Breast epithelium (tissue), 4 donors: ENCODE measurements at regions of chr1 and their contacts with region 1.

Region 1: DNA sequence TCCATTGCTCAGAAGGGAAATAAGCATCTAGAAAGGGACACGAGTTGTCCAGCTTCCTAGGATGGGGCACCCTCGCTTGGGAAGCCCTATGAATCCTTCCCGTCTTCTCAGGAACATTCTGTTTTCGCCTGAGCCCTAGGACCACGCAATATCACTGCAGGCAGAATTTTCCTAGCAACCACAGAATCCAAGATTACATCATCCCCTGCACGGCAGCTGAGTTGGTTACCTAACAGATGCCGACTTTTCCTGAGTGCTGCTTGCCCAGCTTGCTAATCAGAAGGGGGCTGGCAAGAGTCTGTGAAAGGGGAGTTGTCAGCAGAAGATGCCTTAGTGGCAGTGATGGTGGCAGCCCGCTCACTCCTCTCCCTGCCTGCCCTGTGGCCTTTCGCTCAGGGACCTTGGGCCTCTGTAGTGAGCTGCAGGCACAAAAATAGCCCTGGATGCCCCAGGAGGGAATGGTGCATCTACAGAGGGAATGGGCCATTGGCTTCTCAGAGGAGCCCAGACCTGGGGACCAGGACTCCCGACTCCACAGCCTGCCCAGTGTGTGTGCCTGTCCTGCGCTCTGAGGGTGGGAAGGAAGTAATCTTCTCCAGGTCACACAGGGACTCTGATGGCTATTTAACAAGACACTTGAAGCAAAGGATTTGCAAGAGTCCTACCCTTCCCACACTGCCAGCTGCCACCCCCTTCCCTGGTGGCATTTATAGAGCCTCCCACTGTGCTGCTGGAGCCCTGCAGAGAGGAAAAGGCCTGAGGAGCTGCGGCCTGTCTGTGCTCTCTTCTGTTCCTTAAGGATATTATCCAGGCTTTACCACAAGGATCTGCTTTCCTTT is 28.9 kb upstream of the CLSTN1 start:
- DNase-seq: peak in 1 of 2 donors; percentile 80
- H3K4me3 ChIP-seq: no peak overlapping the region
- H3K27ac ChIP-seq: peak overlapping the region; percentile 82 to 92
- H3K4me1 ChIP-seq: no peaks in the 10 kb centered on the region
- H3K27me3 ChIP-seq: no peaks in the 10 kb centered on the region
- CTCF ChIP-seq: no peak
- POLR2A ChIP-seq: no peak

Region 2: GRCh38 chr1:9438431-9439073 is 414.1 kb before region 1 on chr1:
- intact Hi-C with region 1: no loop called
- DNase-seq: peak; percentile 66 to 87
- H3K4me3 ChIP-seq: no peak overlapping the region
- H3K27ac ChIP-seq: peak overlapping the region; percentile 87 to 90
- H3K4me1 ChIP-seq: peaks cover 0 to 7% of the 10 kb centered on the region in 2 donors
- H3K27me3 ChIP-seq: no peaks in the 10 kb centered on the region
- CTCF ChIP-seq: no peak
- POLR2A ChIP-seq: no peak

Region 3: GRCh38 chr1:9705337-9706093 is 147.1 kb before region 1 on chr1:
- intact Hi-C with region 1: loop called (anchors 5 kb)
- DNase-seq: no peak
- H3K4me3 ChIP-seq: no peak overlapping the region
- H3K27ac ChIP-seq: no peak overlapping the region
- H3K4me1 ChIP-seq: no peaks in the 10 kb centered on the region
- H3K27me3 ChIP-seq: no peaks in the 10 kb centered on the region
- CTCF ChIP-seq: no peak
- POLR2A ChIP-seq: no peak

Region 4: DNA sequence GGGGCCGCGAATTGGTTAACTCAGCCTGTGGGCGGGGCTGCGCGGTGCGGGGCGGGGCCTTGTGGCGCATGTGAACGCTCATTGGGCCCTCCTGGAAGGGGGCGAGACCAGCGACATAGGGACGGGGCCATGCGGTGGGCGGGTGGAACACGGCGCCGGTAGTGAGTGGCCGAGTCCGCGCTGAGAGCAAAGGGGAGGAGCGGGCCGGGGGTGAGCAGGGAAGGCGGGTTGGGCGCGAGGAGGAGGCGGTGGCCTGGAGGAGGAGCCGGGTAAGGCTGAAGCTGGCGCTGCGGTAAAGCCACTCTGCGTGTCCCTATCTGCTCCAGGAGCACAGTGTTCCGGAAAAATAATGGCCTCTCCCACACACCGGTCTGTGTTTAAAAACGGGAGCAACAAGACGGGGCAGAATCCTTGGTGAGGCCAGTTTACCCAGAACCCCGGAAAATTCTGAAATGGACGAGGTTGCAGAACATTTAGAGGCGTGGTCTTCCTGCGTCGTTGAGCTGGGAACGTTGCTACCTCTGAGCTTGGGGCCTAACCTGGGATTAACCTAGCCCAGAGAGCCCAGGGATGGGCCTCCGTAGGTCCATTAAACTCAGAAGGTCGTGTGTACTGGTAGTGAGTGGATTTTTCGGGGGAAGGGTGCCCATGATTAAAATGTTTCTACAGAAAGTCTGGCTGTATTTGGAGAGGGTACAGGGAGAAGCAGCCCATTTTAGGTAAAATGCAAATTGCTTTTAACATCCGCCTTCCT is 58.0 kb after region 1 on chr1:
- intact Hi-C with region 1: no loop called
- DNase-seq: peak; percentile 100
- H3K4me3 ChIP-seq: peak overlapping the region; percentile 52 to 73 (median 58)
- H3K27ac ChIP-seq: peak overlapping the region; percentile 95 to 96
- H3K4me1 ChIP-seq: peaks cover 4 to 5% of the 10 kb centered on the region in 2 donors
- H3K27me3 ChIP-seq: no peaks in the 10 kb centered on the region
- CTCF ChIP-seq: no peak
- POLR2A ChIP-seq: peak; percentile 64